ENCODE measurements at regions of chr15 and their contacts with region 1.

Region 1: GRCh38 chr15:32036971-32037370 is 6.7 kb downstream of the CHRNA7 start:
- DNase-seq: no peak
- ATAC-seq: no peak
- H3K4me3 ChIP-seq: no peak overlapping the region
- H3K27ac ChIP-seq: no peak overlapping the region
- H3K4me1 ChIP-seq: no peaks in the 10 kb centered on the region
- H3K27me3 ChIP-seq: peaks cover 0 to 2% (median 0%) of the 10 kb centered on the region in 3 donors
- CTCF ChIP-seq: no peak

Region 2: DNA sequence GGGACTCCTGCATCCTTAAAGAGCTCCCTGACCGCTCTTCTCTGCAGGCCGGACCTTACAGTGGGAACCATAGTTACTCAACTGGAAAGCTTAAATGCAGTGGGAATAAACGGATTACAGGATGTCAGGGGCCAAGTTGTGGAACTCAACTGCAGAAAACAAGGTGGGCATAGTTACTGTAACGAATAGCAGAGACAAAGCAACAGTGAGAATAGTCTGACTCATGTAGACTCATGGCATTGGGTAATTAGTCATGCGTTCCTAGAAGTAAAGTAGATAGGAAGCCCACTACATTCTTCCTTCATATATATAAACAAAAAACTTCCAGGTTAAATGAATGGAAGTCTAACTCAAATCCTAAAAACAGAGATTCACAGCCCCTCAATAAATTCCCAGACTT is 102.2 kb before region 1 on chr15:
- intact Hi-C with region 1: no loop called
- DNase-seq: no peak
- ATAC-seq: no peak
- H3K4me3 ChIP-seq: no peak overlapping the region
- H3K27ac ChIP-seq: no peak overlapping the region
- H3K4me1 ChIP-seq: no peaks in the 10 kb centered on the region
- H3K27me3 ChIP-seq: peaks cover 0 to 2% (median 0%) of the 10 kb centered on the region in 3 donors
- CTCF ChIP-seq: no peak

Region 3: DNA sequence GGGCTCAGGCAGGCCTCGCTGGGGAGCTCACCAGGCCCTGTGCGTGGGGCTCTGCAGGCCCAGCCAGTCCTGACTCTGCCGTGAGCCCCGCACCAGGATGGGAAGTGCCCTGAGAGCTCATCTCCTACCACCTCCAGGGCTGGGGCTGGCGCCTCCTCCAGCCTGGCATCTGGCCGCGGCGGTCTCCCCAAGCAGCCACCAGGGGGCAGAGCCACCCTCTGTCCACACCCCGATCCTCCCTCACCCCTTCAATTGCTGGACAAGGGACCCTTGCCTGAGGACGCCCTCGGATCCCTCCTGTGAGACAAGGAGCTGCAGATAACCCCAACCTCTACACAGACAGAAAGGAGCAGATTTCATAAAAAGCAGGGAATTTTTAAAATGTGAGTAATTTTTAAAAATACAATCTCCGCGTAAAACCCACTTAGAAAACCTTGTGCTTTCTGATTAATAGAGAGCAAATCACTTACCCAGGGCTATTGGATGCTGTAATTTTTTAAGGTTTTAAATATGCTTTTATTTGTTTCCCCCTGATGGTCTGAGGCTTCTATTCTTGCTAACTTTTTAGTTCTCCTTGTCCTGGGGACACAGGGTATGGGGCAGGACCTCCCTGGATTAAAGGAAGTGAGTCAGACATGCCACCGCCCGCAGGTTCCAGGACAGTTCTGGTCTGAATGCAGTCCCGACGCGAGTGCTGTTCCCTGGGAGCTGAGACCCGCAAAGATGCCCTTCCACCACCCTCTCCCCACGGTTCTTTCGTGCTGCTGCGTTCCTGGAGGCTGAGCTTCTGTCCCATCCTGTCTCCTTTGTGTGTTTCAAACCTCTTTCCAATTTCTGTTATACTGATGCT is 58.9 kb before region 1 on chr15:
- intact Hi-C with region 1: no loop called
- DNase-seq: peak in 1 of 2 donors; percentile 70
- ATAC-seq: peak in 3 of 4 donors; percentile 71 to 91 (median 75)
- H3K4me3 ChIP-seq: no peak overlapping the region
- H3K27ac ChIP-seq: no peak overlapping the region
- H3K4me1 ChIP-seq: peaks cover 7% of the 10 kb centered on the region
- H3K27me3 ChIP-seq: peaks cover 0 to 12% (median 0%) of the 10 kb centered on the region in 3 donors
- CTCF ChIP-seq: peak; percentile 77

Region 4: DNA sequence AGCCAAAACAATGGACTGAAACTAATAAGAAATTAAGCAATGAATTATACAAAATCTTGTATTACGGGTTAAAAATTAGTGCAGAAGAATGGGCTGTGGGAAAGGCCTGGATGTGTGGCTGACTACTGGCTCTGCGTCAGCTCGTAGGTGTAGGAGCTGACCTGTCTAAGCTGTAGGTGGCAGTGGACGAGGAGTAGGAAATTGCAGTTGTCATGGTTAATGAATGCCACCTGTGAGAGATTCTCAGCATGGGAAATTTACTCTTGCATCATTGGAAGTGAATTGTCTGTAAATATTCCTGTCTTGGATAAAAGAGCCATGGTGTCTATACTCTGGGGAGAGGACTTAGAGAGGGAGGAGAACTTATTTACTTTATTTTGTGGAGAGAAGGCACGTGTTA is 16.7 kb after region 1 on chr15:
- intact Hi-C with region 1: no loop called
- DNase-seq: no peak
- ATAC-seq: no peak
- H3K4me3 ChIP-seq: no peak overlapping the region
- H3K27ac ChIP-seq: no peak overlapping the region
- H3K4me1 ChIP-seq: no peaks in the 10 kb centered on the region
- H3K27me3 ChIP-seq: no peaks in the 10 kb centered on the region
- CTCF ChIP-seq: no peak

Region 5: DNA sequence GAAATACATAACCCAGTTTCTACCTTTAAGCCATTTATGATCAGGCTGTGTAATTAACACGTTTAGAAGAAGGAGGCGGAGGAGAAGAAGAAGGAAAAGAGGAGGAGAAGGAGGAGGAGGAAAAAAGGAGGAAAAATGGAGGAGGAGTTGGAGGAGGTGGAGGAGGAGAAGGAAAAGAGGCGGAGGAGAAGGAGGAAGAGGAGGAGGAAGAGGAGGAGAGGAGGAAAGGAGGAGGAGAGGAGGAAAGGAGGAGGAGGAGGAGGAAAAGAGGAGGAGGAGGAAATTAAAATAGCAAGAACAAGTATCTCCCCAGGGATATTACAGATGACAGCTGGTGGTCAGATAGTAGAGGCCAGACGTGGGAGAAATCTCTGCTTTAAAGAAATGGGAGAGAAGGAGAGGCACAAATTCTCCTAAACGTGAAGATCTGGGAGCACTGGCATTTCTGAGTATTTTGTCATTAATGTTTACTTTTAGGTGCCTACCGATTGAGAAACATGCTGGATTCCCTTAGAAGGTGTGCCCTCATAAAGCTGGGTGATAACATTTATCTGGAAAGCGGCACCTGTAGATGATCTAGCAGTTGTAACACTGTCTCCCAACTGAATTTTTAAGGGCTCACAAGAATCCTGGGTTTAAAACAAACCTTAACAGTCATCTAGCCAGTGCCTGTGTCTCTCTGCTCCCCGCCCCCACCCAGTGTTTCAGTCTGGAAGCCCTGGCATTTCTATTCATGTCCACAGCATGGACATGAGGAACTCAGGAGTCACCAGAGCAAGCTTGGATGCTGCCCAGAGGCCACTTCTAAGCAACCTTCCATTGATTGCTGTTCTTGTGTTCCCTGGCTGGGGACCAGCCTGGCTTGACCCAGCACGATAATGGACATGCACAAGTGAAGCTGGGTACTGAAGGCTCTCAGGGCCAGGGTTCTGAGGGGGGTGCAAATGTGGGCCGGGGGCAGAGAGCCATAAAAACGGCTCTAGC is 68.6 kb after region 1 on chr15:
- intact Hi-C with region 1: loop called in 1 of 2 experiments (anchors 2 kb)
- DNase-seq: peak in 1 of 2 donors; percentile 68
- ATAC-seq: peak in 3 of 4 donors; percentile 78 to 91 (median 81)
- H3K4me3 ChIP-seq: no peak overlapping the region
- H3K27ac ChIP-seq: no peak overlapping the region
- H3K4me1 ChIP-seq: peaks cover 11% of the 10 kb centered on the region
- H3K27me3 ChIP-seq: no peaks in the 10 kb centered on the region
- CTCF ChIP-seq: no peak